GM12878 (cell line): ENCODE measurements at regions of chr19 and their contacts with region 1.

Region 1: GRCh38 chr19:12400633-12401502 is at the start of gene ZNF799:
- DNase-seq: peak; percentile 81
- ATAC-seq: peak; percentile 96
- H3K4me3 ChIP-seq: peak within 1 kb of the TSS; percentile 96
- H3K27ac ChIP-seq: peak within 1 kb of the TSS; percentile 68
- H3K4me1 ChIP-seq: no peaks in the 10 kb centered on the region
- H3K27me3 ChIP-seq: no peaks in the 10 kb centered on the region
- CTCF ChIP-seq: 0 out of 6 replicates have a peak, but pooled peaks of 1 of the 3 experiments have one; percentile 2
- EP300 ChIP-seq: no peak
- POLR2A ChIP-seq: peak; percentile 66
- RAD21 ChIP-seq: no peak
- polyA plus RNA-seq, gene ZNF799: 1.5 to 2.0 TPM

Region 2: DNA sequence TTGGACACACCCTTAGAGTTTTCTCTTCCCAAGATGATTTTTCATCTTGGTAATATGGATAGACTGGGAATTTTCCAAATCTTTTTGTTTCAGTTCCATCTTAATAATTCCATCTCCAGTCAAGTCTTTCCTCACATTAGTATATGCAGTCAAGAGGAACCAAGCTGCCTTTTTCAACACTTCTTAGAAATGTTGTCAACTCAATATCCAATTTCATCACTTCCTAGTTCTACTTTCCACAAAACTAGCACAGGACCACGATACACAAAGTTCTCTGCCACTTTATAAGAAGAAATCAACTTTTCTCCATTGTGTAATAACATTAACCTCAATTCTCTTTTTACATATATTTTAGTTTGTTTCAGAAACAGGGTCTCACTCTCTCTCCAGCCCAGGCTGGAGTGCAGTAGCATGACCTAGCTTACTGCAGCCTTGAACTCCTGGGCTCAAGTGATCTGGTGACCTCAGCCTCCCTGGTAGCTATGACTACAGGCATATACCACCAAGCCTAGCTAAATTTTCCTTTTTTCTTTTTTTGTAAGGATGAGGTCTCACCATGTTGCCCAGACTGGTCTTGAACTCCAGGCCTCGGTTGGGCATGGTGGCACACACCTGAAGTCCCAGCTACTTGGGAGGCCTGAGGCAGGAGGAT is 24.5 kb after region 1 on chr19:
- CTCF ChIA-PET with region 1: no interaction called
- POLR2A ChIA-PET with region 1: no interaction called
- RAD21 ChIA-PET with region 1: no interaction called
- SMC1A ChIA-PET with region 1: no interaction called
- in situ Hi-C with region 1: no loop called
- intact Hi-C with region 1: no loop called
- DNase-seq: no peak
- ATAC-seq: no peak
- H3K4me3 ChIP-seq: no peak overlapping the region
- H3K27ac ChIP-seq: no peak overlapping the region
- H3K4me1 ChIP-seq: no peaks in the 10 kb centered on the region
- H3K27me3 ChIP-seq: no peaks in the 10 kb centered on the region
- CTCF ChIP-seq: no peak
- EP300 ChIP-seq: no peak
- POLR2A ChIP-seq: no peak
- RAD21 ChIP-seq: no peak

Region 3: DNA sequence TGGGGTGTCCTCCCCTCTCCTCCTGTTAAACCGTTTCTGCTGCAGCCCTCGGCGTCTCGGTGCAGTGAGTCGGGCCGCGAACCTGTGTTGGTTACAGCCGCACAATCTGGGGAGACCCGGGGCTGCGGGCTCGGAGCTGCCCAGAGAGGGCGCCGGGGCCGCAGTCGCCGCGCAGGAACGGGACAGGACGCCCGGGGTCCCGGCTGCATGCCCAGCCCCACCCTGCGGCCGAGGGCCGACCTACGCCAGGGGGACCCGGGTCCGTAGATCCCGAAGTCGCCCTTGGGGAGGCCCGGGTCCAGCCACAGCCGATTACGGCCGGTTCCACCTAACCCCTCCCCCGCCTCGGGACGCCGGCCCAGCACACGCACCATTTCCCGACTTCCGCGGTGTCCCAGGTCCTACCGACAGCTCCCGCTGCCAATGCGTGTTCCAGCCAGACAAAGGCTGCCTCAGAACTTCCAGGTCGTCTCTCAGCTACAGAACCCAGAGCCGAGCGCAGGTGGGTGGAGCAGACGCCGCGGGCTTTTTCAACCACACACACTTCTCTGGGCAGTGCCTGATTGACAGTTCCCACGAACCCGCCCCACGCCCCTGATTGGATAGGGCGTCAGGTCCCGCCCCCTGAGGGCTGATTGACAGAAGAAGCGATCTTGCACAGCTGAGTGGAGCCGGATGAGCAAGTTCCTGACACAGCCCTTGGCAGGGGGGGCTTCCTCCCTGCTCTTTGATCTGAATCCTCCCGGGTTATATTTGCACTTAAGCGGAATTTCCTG is 39.9 kb after region 1 on chr19 and contains the start of gene ZNF443:
- CTCF ChIA-PET with region 1: no interaction called
- POLR2A ChIA-PET with region 1: interaction called, 6 read pairs
- RAD21 ChIA-PET with region 1: interaction called, 6 read pairs
- SMC1A ChIA-PET with region 1: interaction called, 3 read pairs
- in situ Hi-C with region 1: no loop called
- intact Hi-C with region 1: loop called (anchors 2 kb)
- DNase-seq: peak; percentile 94
- ATAC-seq: peak; percentile 97
- H3K4me3 ChIP-seq: peak within 1 kb of the TSS; percentile 74
- H3K27ac ChIP-seq: peak within 1 kb of the TSS; percentile 56
- H3K4me1 ChIP-seq: no peaks in the 10 kb centered on the region
- H3K27me3 ChIP-seq: no peaks in the 10 kb centered on the region
- CTCF ChIP-seq: no peak
- EP300 ChIP-seq: no peak
- POLR2A ChIP-seq: peak; percentile 73
- RAD21 ChIP-seq: no peak
- polyA plus RNA-seq, gene ZNF443: 3.0 to 4.5 TPM

Region 4: GRCh38 chr19:12527034-12527836 is 126.4 kb after region 1 on chr19:
- CTCF ChIA-PET with region 1: no interaction called
- POLR2A ChIA-PET with region 1: no interaction called
- RAD21 ChIA-PET with region 1: no interaction called
- SMC1A ChIA-PET with region 1: no interaction called
- in situ Hi-C with region 1: no loop called
- intact Hi-C with region 1: no loop called
- DNase-seq: no peak
- ATAC-seq: no peak
- H3K4me3 ChIP-seq: no peak overlapping the region
- H3K27ac ChIP-seq: no peak overlapping the region
- H3K4me1 ChIP-seq: no peaks in the 10 kb centered on the region
- H3K27me3 ChIP-seq: no peaks in the 10 kb centered on the region
- CTCF ChIP-seq: no peak
- EP300 ChIP-seq: no peak
- POLR2A ChIP-seq: no peak
- RAD21 ChIP-seq: no peak

Region 5: GRCh38 chr19:12551060-12551832 is 150.4 kb after region 1 on chr19 and contains the start of gene ZNF564:
- CTCF ChIA-PET with region 1: no interaction called
- POLR2A ChIA-PET with region 1: interaction called, 3 read pairs
- RAD21 ChIA-PET with region 1: no interaction called
- SMC1A ChIA-PET with region 1: no interaction called
- in situ Hi-C with region 1: no loop called
- intact Hi-C with region 1: loop called (anchors 2 kb)
- DNase-seq: peak; percentile 99
- ATAC-seq: peak; percentile 99
- H3K4me3 ChIP-seq: peak within 1 kb of the TSS; percentile 88
- H3K27ac ChIP-seq: peak within 1 kb of the TSS; percentile 80
- H3K4me1 ChIP-seq: peaks cover 6% of the 10 kb centered on the region; the same call in 1 of the 2 replicates
- H3K27me3 ChIP-seq: no peaks in the 10 kb centered on the region
- CTCF ChIP-seq: no peak
- EP300 ChIP-seq: no peak
- POLR2A ChIP-seq: peak; percentile 93
- RAD21 ChIP-seq: no peak
- polyA plus RNA-seq, gene ZNF564: 1.5 to 1.8 TPM